Right cardiac atrium (tissue), 5 donors: ENCODE measurements at regions of chr12 and their contacts with region 1.

Region 1: DNA sequence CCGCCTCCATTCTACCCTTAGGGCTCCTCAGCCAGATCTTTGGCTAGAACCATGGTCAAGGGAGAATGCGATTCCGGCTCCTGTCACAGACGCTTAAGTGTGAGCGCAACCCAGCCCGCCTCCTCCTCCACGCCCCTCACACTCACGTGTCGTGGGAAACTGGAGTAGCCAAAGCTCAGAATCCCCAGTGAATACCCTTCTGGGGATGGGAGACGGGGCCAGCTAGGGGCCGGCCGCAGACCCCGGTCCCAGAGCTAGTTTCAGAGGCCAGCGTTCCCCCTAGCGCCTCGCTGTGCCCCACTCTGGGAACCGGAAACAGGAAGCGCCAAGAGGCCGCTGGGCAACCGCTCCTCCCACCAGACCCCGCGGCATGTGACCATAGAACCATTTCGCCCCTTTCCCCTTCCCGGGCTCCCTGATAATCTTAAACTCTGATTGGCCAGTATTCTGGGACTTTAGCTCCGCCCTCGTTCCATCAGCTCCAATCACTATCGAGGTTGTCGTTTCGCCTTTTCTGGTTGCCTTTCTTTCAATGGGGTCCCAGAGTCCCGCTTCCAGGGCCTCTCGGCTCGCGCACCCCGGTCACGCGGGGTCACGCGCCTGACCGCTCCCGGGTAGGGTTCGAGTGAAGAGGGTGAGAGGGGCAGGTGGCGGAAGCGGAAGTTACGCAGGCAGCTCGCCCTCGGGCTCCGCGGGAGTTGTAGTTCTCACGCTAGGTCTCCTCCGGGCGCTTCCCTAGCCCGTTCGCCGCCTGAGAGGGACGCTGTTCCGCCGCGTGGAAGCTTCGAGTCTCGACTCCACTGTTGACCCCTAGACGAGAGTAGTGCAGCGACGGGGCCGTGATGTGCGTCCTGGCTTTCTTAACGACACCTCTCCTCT is at the start of gene M6PR:
- DNase-seq: peak; percentile 94 to 97 (median 97)
- ATAC-seq: peak; percentile 98
- H3K4me3 ChIP-seq: peak within 1 kb of the TSS; percentile 75
- H3K27ac ChIP-seq: peak within 1 kb of the TSS; percentile 96
- H3K4me1 ChIP-seq: peaks cover 2% of the 10 kb centered on the region
- H3K27me3 ChIP-seq: no peaks in the 10 kb centered on the region
- total RNA-seq, gene M6PR: 97.1 to 109 (median 106) TPM

Region 2: GRCh38 chr12:8681041-8681902 is 268.3 kb before region 1 on chr12:
- intact Hi-C with region 1: no loop called
- DNase-seq: no peak
- ATAC-seq: peak; percentile 65 to 72
- H3K4me3 ChIP-seq: peak overlapping the region; percentile 5
- H3K27ac ChIP-seq: peak overlapping the region; percentile 54
- H3K4me1 ChIP-seq: no peaks in the 10 kb centered on the region
- H3K27me3 ChIP-seq: no peaks in the 10 kb centered on the region

Region 3: DNA sequence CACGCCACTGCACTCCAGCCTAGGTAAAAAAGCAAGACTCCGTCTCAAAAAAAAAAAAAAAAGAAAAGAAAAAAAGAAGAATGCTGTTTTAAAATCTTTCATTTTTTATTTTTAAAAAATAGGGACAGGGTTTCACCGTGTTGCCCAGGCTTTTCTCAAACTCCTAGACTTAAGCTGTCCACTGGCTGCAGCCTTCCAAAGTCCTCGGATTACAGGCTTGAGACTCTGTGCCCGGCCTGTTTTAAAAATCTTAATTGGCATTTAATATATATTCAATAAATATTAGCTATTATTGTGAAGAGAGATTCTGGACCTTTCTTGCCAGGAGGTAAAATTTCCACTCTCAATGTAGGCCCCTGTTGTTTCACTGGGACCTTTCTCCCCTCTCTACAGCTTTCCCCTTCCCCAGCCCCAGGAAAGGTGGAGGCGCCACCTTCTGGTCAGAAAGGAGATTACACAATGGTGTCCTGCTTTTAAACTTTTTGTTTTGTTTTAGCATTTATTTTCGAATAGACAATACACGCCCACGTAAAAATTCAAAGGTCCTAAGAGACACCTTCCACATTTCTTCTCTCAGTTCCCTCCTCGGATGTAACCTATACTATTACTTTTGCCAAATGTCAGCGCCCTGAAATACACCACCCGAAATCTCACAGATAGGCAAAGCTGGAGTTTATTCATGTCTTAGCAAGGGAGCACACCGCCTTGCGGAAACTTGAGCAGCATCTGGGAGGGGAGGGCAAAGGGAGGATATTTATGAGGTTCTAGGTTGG is 59.1 kb before region 1 on chr12:
- intact Hi-C with region 1: no loop called
- DNase-seq: peak in 2 of 3 donors; percentile 34 to 62
- ATAC-seq: peak; percentile 71 to 82
- H3K4me3 ChIP-seq: peak overlapping the region; percentile 85
- H3K27ac ChIP-seq: no peak overlapping the region
- H3K4me1 ChIP-seq: no peaks in the 10 kb centered on the region
- H3K27me3 ChIP-seq: no peaks in the 10 kb centered on the region

Region 4: GRCh38 chr12:9027161-9028059 is 77.8 kb after region 1 on chr12:
- intact Hi-C with region 1: no loop called
- DNase-seq: no peak
- ATAC-seq: no peak
- H3K4me3 ChIP-seq: no peak overlapping the region
- H3K27ac ChIP-seq: no peak overlapping the region
- H3K4me1 ChIP-seq: no peaks in the 10 kb centered on the region
- H3K27me3 ChIP-seq: no peaks in the 10 kb centered on the region

Region 5: GRCh38 chr12:9039397-9039977 is 89.9 kb after region 1 on chr12:
- intact Hi-C with region 1: loop called in 2 of 4 experiments (anchors 2 to 5 kb)
- DNase-seq: no peak
- ATAC-seq: peak; percentile 57 to 71
- H3K4me3 ChIP-seq: no peak overlapping the region
- H3K27ac ChIP-seq: no peak overlapping the region
- H3K4me1 ChIP-seq: no peaks in the 10 kb centered on the region
- H3K27me3 ChIP-seq: no peaks in the 10 kb centered on the region